Heart left ventricle (tissue), 16 donors: ENCODE measurements at regions of chr3 and their contacts with region 1.

Region 1: DNA sequence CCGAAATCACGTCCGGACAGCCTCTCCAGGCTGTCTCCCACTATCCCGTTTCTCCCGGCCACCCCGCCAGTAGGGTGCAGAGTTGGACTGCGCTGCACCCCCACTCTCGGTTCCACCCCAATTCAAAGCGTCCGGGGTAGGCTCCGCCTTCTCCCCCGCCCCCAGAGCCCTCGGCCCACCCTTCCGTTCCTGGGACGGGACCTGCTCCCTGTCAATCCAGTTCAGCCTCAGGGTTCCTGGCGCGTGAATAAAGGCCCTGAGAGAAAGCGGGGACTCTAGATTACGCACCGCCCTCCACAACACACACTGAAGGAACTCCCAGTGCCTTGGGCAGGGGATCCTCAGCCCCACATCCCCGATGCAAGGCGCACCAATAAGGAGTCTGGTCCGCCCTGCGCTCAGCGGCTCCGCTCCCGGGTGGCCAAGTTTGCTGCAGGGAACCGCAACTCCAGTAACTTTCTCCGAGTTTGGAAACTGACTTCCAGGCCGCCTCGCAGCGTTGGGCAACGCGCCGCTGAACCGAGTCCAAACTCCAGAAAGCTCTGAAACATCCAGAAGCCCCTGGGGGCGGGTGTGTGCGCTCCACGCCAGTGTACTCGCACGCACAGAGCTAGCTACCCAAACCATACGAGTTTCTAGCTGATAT is 1.9 kb downstream of the ADAMTS9 start:
- DNase-seq: peak; percentile 94 to 96 (median 95)
- ATAC-seq: peak; percentile 87 to 95 (median 92)
- H3K4me3 ChIP-seq: peak overlapping the region; percentile 60 to 86 (median 71)
- H3K27ac ChIP-seq: peak overlapping the region; percentile 89 to 98 (median 96)
- H3K4me1 ChIP-seq: peaks cover 0 to 50% (median 4%) of the 10 kb centered on the region in 12 donors
- H3K27me3 ChIP-seq: peaks cover 0 to 17% (median 0%) of the 10 kb centered on the region in 9 donors
- CTCF ChIP-seq: peak; percentile 28 to 81 (median 66)
- POLR2A ChIP-seq: peak; percentile 14 to 84

Region 2: GRCh38 chr3:64445321-64446300 is 240.3 kb before region 1 on chr3:
- intact Hi-C with region 1: no loop called
- DNase-seq: peak in 2 of 5 donors; percentile 26 to 64
- ATAC-seq: peak in 2 of 4 donors; percentile 49 to 60
- H3K4me3 ChIP-seq: peak overlapping the region; percentile 25 to 59 (median 42)
- H3K27ac ChIP-seq: no peak overlapping the region
- H3K4me1 ChIP-seq: peaks cover 0 to 21% (median 8%) of the 10 kb centered on the region in 12 donors
- H3K27me3 ChIP-seq: peaks cover 8 to 50% (median 28%) of the 10 kb centered on the region in 9 donors
- CTCF ChIP-seq: no peak
- POLR2A ChIP-seq: no peak

Region 3: DNA sequence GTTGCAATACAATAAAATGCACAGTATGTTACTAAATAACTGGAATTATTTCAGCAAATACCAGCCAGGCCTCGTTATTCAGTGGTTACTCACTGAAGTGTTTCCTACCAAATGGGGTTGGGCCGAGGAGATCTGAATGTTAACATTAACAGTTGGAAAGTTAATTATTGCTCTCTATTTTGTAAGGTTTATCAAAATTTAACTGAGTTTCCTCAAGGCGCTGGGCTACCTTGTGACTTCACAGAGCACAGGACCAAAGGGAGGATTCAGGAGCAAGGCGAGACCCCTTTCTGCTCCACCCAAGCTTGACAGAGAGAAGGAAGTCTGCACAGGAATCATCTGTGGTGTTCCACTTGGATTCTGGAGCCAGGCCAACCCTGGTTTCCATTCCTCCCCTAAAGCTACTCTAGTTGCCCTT is 19.7 kb before region 1 on chr3:
- intact Hi-C with region 1: no loop called
- DNase-seq: peak in 4 of 5 donors; percentile 43 to 51 (median 46)
- ATAC-seq: peak in 3 of 4 donors; percentile 20 to 48 (median 43)
- H3K4me3 ChIP-seq: no peak overlapping the region
- H3K27ac ChIP-seq: peak overlapping the region in 3 of 12 donors; percentile 3 to 35 (median 20)
- H3K4me1 ChIP-seq: peaks cover 0 to 51% (median 26%) of the 10 kb centered on the region in 12 donors
- H3K27me3 ChIP-seq: no peaks in the 10 kb centered on the region
- CTCF ChIP-seq: no peak
- POLR2A ChIP-seq: no peak

Region 4: DNA sequence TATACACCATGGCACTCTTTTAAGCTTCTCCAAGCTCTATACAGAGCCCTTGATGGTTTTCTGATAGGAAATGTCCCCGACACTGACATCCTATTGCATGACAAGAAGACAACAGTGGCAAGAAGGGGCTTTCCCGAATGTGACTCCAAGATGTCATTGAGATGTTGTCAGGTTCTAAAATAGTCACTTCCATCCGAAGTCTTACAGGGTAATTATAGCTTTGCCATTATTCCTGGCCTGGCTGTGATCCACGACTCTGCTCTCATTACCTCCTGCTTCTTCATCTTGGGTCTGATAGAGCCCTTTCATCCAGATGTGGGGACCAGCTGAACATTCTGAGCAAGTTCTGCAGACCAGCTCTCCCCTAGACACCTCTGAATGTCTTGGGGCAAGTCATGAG is 42.5 kb after region 1 on chr3:
- intact Hi-C with region 1: loop called in 1 of 10 experiments (anchors 2 kb)
- DNase-seq: peak in 4 of 5 donors; percentile 37 to 64 (median 50)
- ATAC-seq: peak; percentile 71 to 87 (median 80)
- H3K4me3 ChIP-seq: no peak overlapping the region
- H3K27ac ChIP-seq: peak overlapping the region in 11 of 12 donors; percentile 30 to 79 (median 51)
- H3K4me1 ChIP-seq: peaks cover 0 to 41% (median 16%) of the 10 kb centered on the region in 12 donors
- H3K27me3 ChIP-seq: no peaks in the 10 kb centered on the region
- CTCF ChIP-seq: no peak
- POLR2A ChIP-seq: no peak

Region 5: DNA sequence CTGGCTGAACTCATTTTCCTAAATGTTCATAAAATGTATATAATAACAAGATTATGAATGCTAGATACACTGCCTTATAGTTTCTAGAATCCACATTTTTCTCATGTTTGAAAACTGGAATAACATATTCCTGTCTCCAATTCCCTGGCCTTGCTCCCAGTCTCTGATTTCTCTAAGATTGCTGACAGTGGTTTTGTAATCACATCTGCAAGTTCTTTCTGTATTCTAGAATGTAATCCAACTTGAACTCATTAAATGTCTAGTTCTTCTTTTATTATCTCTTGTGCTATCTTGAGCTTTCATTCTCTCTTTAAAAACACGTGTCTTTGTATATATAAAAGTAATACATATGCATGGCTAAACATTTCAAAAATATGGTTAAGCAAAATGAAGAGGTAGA is 217.1 kb after region 1 on chr3:
- intact Hi-C with region 1: loop called in 8 of 10 experiments (anchors 1 to 10 kb)
- DNase-seq: no peak
- ATAC-seq: no peak
- H3K4me3 ChIP-seq: no peak overlapping the region
- H3K27ac ChIP-seq: peak overlapping the region in 11 of 12 donors; percentile 1 to 89 (median 80)
- H3K4me1 ChIP-seq: peaks cover 9 to 77% (median 55%) of the 10 kb centered on the region in 12 donors
- H3K27me3 ChIP-seq: no peaks in the 10 kb centered on the region
- CTCF ChIP-seq: no peak
- POLR2A ChIP-seq: no peak

Region 6: DNA sequence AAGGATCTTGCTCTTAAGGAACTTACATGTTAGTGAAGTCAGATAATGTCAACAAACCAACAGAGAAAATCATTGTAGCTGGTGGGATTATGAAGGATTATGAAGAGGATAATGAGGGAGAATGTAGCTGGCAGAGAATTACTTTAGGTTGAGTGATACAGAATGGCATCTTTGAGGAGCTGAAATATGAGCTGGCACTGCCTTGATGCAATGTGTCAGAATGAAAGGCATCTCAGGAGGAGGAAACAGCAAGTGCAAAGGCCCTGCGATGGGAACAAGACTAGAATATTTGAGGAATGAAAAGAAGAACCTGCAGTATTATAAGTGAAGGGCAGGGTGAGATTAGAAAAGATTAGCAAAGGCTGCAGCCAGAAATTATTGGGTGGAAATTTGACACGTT is 239.0 kb after region 1 on chr3:
- intact Hi-C with region 1: loop called in 1 of 10 experiments (anchors 5 kb)
- DNase-seq: no peak
- ATAC-seq: no peak
- H3K4me3 ChIP-seq: no peak overlapping the region
- H3K27ac ChIP-seq: peak overlapping the region in 1 of 12 donors; percentile 18
- H3K4me1 ChIP-seq: peaks cover 0 to 23% (median 4%) of the 10 kb centered on the region in 12 donors
- H3K27me3 ChIP-seq: no peaks in the 10 kb centered on the region
- CTCF ChIP-seq: no peak
- POLR2A ChIP-seq: no peak

Region 7: DNA sequence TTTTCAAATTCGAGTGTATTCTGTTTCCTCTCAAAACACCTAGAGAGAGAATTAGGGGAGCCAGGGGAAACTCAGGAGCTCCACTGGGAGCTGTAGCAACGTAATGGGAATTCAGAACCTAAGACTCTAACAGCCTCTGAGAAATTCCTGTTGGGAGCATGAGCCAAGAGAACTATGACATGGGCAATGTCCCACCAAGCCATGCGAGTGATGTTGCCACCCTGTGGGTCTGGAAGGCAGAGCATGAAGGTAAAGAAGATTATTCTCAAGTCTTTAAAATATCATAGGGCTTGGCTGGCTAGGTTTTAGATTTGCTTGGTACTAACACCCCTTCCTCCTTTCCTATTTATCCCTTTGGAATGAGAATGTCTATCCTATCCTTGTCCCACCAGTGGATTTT is 394.5 kb after region 1 on chr3:
- intact Hi-C with region 1: loop called in 3 of 10 experiments (anchors 5 to 10 kb)
- DNase-seq: peak in 1 of 5 donors; percentile 37
- ATAC-seq: peak in 3 of 4 donors; percentile 50 to 57 (median 53)
- H3K4me3 ChIP-seq: no peak overlapping the region
- H3K27ac ChIP-seq: no peak overlapping the region
- H3K4me1 ChIP-seq: peaks cover 0 to 4% (median 0%) of the 10 kb centered on the region in 12 donors
- H3K27me3 ChIP-seq: no peaks in the 10 kb centered on the region
- CTCF ChIP-seq: peak in 9 of 12 donors; percentile 11 to 42 (median 22)
- POLR2A ChIP-seq: no peak

Region 8: DNA sequence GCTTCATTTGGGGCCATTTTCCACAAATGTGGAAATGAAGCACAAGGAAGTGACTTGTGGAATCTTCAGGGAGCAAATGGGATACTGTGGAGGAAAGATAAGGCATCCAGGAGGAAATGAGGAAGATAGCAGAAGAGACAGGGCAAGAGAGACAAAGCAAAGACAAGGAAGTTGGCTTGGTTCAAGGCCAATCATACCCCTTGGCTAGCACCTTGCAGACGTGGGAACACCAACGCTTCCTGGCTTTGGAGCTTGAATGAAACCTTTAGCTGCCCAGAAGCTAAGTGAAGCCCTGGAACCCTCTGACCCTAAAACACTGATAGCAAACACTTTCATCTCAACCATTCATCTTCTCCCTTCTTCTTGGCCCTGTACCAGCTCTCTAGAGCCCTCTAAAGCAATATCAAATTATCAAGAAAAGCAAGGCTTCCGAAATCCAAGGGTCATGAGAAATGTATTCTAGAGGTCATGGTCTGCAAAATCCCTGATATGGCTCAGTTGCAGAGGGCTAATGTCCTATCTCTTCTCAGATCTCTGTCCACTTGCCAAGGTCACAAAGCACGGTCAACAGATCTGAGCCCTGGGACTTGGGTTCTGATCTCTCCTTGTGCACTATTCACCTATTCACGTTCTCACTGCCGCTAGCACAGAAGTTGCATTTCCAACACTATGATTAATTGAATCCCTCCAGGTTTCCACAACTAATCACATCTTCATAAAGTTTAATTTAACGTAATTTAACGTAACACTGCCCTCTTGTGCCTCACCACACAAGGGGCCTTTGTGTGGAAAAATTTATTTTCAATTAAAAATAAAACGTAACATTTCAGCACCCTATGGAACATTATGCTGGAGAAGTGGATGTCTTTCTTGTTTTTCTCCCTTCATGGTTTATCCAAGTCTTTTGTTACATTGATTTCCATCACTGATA is 559.5 kb after region 1 on chr3:
- intact Hi-C with region 1: loop called in 4 of 10 experiments (anchors 5 to 10 kb)
- DNase-seq: no peak
- ATAC-seq: peak in 3 of 4 donors; percentile 27 to 57 (median 51)
- H3K4me3 ChIP-seq: no peak overlapping the region
- H3K27ac ChIP-seq: no peak overlapping the region
- H3K4me1 ChIP-seq: peaks cover 0 to 10% (median 1%) of the 10 kb centered on the region in 12 donors
- H3K27me3 ChIP-seq: no peaks in the 10 kb centered on the region
- CTCF ChIP-seq: peak; percentile 27 to 66 (median 55)
- POLR2A ChIP-seq: no peak